AG04449 (cell line): ENCODE measurements at regions of chr14 and their contacts with region 1.

Region 1: DNA sequence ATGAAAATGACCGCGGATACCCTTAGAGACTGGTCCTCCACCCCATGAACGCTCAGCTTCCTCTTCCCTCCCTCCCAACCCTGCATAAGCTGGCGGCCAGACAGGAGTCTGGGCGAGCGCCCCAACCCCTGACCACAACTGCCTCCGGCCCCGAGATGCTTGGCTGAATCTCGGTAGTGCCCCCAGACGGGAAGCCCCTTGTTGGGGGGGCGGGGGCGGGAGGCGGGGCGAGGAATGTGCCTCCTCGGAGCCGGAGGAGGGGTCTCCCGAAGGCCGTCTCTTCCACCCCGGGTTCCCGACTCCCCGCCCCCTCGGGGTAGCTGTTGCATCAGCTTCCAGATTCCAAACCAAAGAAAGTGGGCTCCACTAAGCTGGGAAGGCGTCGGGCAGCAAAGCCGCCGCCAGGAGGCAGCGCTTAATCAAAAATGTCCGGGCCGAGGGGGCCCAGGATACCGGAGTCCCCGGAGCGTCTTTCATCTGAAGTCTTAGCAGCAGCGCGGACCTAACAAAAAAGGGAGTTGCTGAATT is 7.1 kb upstream of the MRPL52 start:
- DNase-seq: no peak
- H3K4me3 ChIP-seq: peak overlapping the region; percentile 24
- CTCF ChIP-seq: peak; percentile 78

Region 2: GRCh38 chr14:22438742-22439141 is 383.9 kb before region 1 on chr14:
- CTCF ChIA-PET with region 1: no interaction called
- POLR2A ChIA-PET with region 1: no interaction called
- DNase-seq: no peak
- H3K4me3 ChIP-seq: no peak overlapping the region
- CTCF ChIP-seq: no peak

Region 3: DNA sequence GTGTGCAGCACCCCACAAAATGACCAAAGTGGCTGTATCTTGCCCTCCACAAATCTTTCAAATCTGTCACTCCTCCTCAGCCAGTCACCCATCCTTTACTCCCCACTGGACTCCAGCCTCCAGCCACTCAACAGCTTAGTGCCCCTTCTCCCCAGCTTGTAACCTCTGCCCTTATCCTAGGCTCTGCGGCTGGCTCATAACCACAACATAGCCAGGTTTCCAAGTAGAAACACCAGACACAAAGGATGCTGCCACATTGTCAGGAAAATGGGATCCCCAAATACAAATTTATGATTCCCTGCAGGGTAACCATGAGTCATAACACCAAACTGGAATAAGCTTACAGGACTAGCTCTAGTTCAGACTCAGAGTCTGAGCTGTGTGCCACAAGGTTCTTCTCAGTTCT is 41.0 kb before region 1 on chr14:
- CTCF ChIA-PET with region 1: interaction called, 13 read pairs
- POLR2A ChIA-PET with region 1: no interaction called
- DNase-seq: no peak
- H3K4me3 ChIP-seq: no peak overlapping the region
- CTCF ChIP-seq: no peak

Region 4: DNA sequence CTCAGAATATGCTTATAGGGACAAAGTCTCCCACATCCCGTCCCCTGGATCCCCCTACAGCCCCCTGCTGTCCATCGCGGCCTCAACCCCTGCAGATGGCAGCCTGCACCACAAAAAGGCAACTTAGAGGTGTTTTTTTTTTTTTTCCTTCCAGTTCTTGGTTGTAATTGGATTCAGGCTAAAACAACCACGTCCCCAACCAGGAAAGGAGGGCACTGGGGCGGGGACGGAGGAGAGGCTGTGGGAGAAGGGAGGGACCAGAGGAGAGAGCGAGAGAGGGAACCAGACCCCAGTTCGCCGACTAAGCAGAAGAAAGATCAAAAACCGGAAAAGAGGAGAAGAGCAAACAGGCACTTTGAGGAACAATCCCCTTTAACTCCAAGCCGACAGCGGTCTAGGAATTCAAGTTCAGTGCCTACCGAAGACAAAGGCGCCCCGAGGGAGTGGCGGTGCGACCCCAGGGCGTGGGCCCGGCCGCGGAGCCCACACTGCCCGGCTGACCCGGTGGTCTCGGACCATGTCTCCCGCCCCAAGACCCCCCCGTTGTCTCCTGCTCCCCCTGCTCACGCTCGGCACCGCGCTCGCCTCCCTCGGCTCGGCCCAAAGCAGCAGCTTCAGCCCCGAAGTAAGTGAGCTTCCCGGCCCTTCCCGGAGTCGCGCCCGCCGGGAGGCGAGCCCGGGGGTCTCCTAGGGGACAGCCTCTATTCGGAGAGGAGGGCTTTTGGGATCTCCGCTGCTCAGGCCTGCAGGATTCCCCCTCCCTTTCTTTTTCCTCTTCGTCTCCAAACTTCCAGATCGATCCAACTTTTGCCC is 13.9 kb after region 1 on chr14 and contains the start of gene MMP14:
- CTCF ChIA-PET with region 1: interaction called, 111 read pairs
- POLR2A ChIA-PET with region 1: interaction called, 16 read pairs
- DNase-seq: no peak
- H3K4me3 ChIP-seq: peak within 1 kb of the TSS; percentile 90
- CTCF ChIP-seq: peak; percentile 58